BJ (cell line): ENCODE measurements at regions of chr3 and their contacts with region 1.

Region 1: DNA sequence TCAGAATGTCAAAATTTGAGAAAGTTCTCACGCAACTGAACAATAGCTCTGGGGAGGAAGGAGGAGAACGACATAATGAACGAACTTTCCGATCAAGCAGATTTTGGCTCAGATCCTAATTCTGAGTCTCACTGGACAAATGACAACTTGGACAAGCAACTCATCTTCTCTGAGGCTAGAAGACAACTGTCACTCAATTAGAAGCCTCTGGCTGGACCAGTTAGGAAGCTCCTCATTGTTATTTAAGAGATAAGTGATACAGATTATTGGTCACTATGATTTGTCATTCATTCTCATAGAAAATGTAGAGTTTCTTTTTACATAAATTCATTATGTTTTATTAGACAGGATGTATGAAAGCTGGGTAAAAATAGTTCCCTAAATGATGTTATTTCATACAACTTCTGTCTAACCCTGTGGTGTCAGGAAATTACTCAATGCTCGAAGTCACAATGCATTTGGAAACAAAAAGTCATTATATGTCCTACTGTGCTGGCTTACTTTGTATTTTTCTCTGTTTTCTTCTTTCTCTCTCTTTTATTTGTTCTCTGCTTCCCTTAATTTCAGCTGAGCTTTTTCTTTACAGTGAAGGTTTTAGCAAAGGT is 11.0 kb upstream of the C3orf49 start:
- DNase-seq: no peak
- H3K4me3 ChIP-seq: no peak overlapping the region
- H3K27me3 ChIP-seq: no peaks in the 10 kb centered on the region
- CTCF ChIP-seq: no peak

Region 2: GRCh38 chr3:63818281-63819150 is 10.5 kb after region 1 on chr3:
- CTCF ChIA-PET with region 1: interaction called, 16 read pairs
- POLR2A ChIA-PET with region 1: no interaction called
- DNase-seq: no peak
- H3K4me3 ChIP-seq: no peak overlapping the region
- H3K27me3 ChIP-seq: no peaks in the 10 kb centered on the region
- CTCF ChIP-seq: peak; percentile 72

Region 3: GRCh38 chr3:63824309-63824708 is 16.2 kb after region 1 on chr3:
- CTCF ChIA-PET with region 1: interaction called, 16 read pairs
- POLR2A ChIA-PET with region 1: interaction called, 13 read pairs
- DNase-seq: no peak
- H3K4me3 ChIP-seq: no peak overlapping the region
- H3K27me3 ChIP-seq: no peaks in the 10 kb centered on the region
- CTCF ChIP-seq: no peak